ENCODE measurements at regions of chr4 and their contacts with region 1.

Region 1: GRCh38 chr4:86934771-86935565 is at the start of gene AFF1:
- DNase-seq: peak; percentile 79
- ATAC-seq: peak; percentile 94
- H3K4me3 ChIP-seq: peak within 1 kb of the TSS; percentile 80
- H3K27ac ChIP-seq: peak within 1 kb of the TSS; percentile 82
- H3K4me1 ChIP-seq: peaks cover 5% of the 10 kb centered on the region
- H3K27me3 ChIP-seq: no peaks in the 10 kb centered on the region
- CTCF ChIP-seq: peak; percentile 40
- POLR2A ChIP-seq: peak; percentile 78
- RAD21 ChIP-seq: 0 out of 2 replicates have a peak, but pooled peaks have one; percentile 15
- total RNA-seq, gene AFF1: 7.0 and 10.8 TPM in 2 replicates

Region 2: DNA sequence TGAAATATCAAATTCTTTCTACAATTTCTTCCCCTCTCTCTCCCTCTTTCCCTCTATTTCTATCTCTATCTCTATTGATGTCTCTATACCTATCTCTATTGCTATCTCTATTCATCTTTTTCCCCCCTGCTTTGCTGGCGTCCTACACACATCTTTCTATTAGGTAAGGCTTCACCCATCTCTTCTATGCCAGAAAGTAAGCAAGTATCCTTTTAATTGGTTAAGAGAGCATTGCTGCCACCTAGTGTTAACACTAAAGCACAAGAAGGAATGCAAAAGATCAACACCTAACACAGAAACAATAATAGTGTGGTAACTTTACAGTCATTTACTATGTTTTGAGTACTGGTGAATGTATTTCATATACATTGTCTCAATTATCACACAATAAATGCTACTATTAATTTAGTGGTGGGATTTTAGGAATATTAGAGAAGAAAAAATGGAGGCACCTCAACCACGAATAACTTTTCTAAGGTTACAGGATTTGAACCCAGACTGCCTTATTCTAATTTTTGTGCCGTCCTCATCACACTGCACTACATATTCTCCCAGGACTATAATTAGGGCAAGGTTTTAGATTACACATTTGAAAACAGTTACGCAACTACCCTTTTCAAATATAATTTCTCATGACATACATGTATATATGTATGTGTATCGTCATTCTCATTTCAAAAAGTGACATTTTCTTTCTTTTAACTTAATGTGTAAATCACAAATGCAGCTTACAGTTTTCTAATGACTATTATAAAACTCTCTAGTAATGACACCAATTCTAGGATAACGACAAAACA is 39.1 kb before region 1 on chr4:
- CTCF ChIA-PET with region 1: no interaction called
- POLR2A ChIA-PET with region 1: no interaction called
- dilution Hi-C with region 1: no loop called
- in situ Hi-C with region 1: no loop called
- intact Hi-C with region 1: no loop called
- DNase-seq: peak; percentile 77
- ATAC-seq: peak; percentile 38
- H3K4me3 ChIP-seq: no peak overlapping the region
- H3K27ac ChIP-seq: no peak overlapping the region
- H3K4me1 ChIP-seq: peaks cover 5% of the 10 kb centered on the region
- H3K27me3 ChIP-seq: no peaks in the 10 kb centered on the region
- CTCF ChIP-seq: peak; percentile 84
- POLR2A ChIP-seq: no peak
- RAD21 ChIP-seq: peak; percentile 87

Region 3: DNA sequence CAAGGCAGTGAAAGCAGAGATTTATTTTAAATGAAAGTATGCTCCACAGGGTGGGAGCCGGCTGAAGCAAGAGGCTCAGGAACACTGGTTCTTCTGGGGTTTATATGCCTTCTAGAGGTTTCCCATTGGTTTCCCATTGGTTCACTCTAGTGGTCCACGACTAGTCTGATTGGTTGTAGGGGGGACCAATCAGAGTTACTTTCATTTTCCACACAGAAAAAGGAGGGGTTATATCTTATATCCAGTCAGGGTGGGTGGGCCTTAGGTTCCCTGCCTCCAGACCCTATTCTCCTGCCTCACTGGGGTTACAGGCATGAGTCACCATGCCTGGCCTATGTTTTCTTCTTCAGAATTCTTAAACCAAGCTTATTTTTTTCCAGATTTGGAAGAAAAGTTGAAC is 183.9 kb after region 1 on chr4:
- CTCF ChIA-PET with region 1: no interaction called
- POLR2A ChIA-PET with region 1: no interaction called
- dilution Hi-C with region 1: no loop called
- in situ Hi-C with region 1: no loop called
- intact Hi-C with region 1: loop called (anchors 5 kb)
- DNase-seq: peak; percentile 93
- ATAC-seq: peak; percentile 87
- H3K4me3 ChIP-seq: no peak overlapping the region; the same call in 1 of the 2 replicates
- H3K27ac ChIP-seq: peak overlapping the region; percentile 72
- H3K4me1 ChIP-seq: peaks cover 28% of the 10 kb centered on the region
- H3K27me3 ChIP-seq: no peaks in the 10 kb centered on the region
- CTCF ChIP-seq: no peak
- POLR2A ChIP-seq: no peak
- RAD21 ChIP-seq: no peak